A549 (cell line): ENCODE measurements at regions of chr1 and their contacts with region 1.

Region 1: GRCh38 chr1:151189638-151190445 is at the start of gene VPS72:
- DNase-seq: peak; percentile 93
- ATAC-seq: peak; percentile 94 to 98
- H3K4me3 ChIP-seq: peak within 1 kb of the TSS; percentile 80
- H3K27ac ChIP-seq: peak within 1 kb of the TSS; percentile 86 to 89
- H3K4me1 ChIP-seq: peaks cover 20% of the 10 kb centered on the region
- CTCF ChIP-seq: no peak
- EP300 ChIP-seq: 0 out of 5 replicates have a peak, but pooled peaks of 1 of the 2 experiments have one; percentile 14
- POLR2A ChIP-seq: peak; percentile 75
- RAD21 ChIP-seq: no peak
- polyA plus RNA-seq, gene VPS72: 64.4 and 81.2 TPM in 2 replicates

Region 2: GRCh38 chr1:151165738-151166505 is 23.9 kb before region 1 on chr1 and contains the starts of genes LYSMD1 and SCNM1:
- CTCF ChIA-PET with region 1: interaction called, 5 read pairs
- POLR2A ChIA-PET with region 1: interaction called, 12 read pairs
- DNase-seq: peak; percentile 96 to 99
- ATAC-seq: peak; percentile 96 to 98
- H3K4me3 ChIP-seq: peak within 1 kb of the TSS; percentile 75
- H3K27ac ChIP-seq: peak within 1 kb of the TSS; percentile 86 to 91
- H3K4me1 ChIP-seq: peaks cover 14% of the 10 kb centered on the region; the same call in 2 of the 3 replicates
- CTCF ChIP-seq: no peak
- EP300 ChIP-seq: no peak
- POLR2A ChIP-seq: peak; percentile 44; the same call in 1 of the 2 replicates
- RAD21 ChIP-seq: no peak
- polyA plus RNA-seq, gene LYSMD1: 10.5 and 11.6 TPM in 2 replicates
- polyA plus RNA-seq, gene SCNM1: 27.9 and 29.3 TPM in 2 replicates

Region 3: GRCh38 chr1:151175910-151176309 is 13.9 kb before region 1 on chr1 and contains the start of gene TMOD4:
- CTCF ChIA-PET with region 1: interaction called, 12 read pairs
- POLR2A ChIA-PET with region 1: interaction called, 8 read pairs
- DNase-seq: peak in 1 of 2 experiments; percentile 37
- ATAC-seq: peak; percentile 83 to 92
- H3K4me3 ChIP-seq: no peak within 1 kb of the TSS
- H3K27ac ChIP-seq: no peak within 1 kb of the TSS
- H3K4me1 ChIP-seq: no peaks in the 10 kb centered on the region
- CTCF ChIP-seq: peak; percentile 33
- EP300 ChIP-seq: no peak
- POLR2A ChIP-seq: no peak
- RAD21 ChIP-seq: no peak
- polyA plus RNA-seq, gene TMOD4: 0.30 TPM in 1 of 2 replicates, not detected in the other

Region 4: DNA sequence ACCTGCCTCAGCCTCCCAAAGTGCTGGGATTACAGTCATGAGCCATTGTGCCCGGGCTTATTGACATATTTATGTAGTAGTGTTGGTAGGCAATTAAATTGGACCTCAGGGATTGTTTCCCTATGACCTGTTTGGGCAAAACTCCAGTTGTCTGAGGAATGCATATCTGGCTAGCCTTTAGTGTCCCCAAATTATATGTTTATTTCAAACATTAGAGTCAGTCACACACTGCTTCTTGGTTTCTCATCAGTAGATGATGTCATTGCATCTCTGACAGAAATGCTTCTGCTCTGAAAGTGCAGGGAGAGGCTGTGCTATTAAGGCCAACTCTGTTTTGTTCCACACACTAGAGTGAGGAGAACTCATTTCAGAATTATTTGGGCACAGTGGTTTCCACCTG is 21.0 kb after region 1 on chr1:
- CTCF ChIA-PET with region 1: no interaction called
- POLR2A ChIA-PET with region 1: no interaction called
- DNase-seq: no peak
- ATAC-seq: no peak
- H3K4me3 ChIP-seq: no peak overlapping the region
- H3K27ac ChIP-seq: no peak overlapping the region
- H3K4me1 ChIP-seq: peaks cover 4% of the 10 kb centered on the region; the same call in 1 of the 3 replicates
- CTCF ChIP-seq: no peak
- EP300 ChIP-seq: no peak
- POLR2A ChIP-seq: no peak
- RAD21 ChIP-seq: no peak

Region 5: DNA sequence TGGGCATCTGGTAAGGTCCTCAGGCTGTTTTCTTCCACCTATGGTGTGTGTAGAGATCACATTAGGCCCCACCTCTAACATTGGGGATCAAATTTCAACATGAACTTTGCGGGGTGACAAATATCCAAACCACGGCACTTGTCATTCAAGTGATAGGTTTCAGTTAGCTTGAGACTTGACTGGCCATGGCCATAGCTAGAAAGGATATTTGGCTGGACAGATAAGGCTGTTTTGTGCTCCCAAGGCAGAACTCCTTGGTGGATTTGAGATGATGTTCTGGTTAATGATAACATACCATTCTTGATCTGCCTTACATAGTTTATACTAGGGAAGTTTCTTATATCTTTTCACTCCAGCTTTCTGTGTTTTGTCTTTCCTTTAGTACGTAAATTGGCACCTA is 478.2 kb after region 1 on chr1:
- CTCF ChIA-PET with region 1: no interaction called
- POLR2A ChIA-PET with region 1: no interaction called
- DNase-seq: no peak
- ATAC-seq: no peak
- H3K4me3 ChIP-seq: no peak overlapping the region
- H3K27ac ChIP-seq: no peak overlapping the region
- H3K4me1 ChIP-seq: no peaks in the 10 kb centered on the region
- CTCF ChIP-seq: no peak
- EP300 ChIP-seq: no peak
- POLR2A ChIP-seq: no peak
- RAD21 ChIP-seq: no peak